ENCODE measurements at regions of chrX and their contacts with region 1.

Region 1: DNA sequence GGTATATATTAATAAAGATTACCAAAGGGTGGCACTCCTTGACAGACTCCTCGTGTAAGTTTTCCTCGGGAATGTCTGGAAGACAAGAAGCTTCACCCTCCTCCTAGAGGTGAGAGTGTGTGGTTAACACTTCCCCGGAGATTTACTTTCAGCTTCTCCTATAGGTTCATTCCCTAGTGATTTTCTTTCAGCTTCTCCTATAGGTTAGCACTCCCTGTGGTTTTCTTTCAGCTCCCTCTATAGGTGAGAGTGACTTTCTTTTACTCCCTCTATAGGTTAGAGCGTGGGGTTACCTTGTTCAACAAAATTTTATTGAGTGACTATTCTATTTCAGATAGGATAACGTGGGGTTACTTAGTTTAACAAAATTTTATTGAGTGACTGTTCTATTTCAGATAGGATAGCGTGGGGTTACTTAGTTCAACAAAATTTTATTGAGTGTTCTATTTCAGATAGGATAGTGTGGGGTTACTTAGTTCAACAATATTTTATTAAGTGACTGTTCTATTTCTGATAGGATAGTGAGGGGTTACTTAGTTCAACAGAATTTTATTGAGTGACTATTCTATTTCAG is 106.0 kb upstream of the PLAC1 start:
- DNase-seq: peak; percentile 38 to 55 (median 54)
- H3K4me3 ChIP-seq: no peak overlapping the region
- H3K27ac ChIP-seq: no peak overlapping the region
- H3K4me1 ChIP-seq: no peaks in the 10 kb centered on the region
- H3K27me3 ChIP-seq: no peaks in the 10 kb centered on the region

Region 2: DNA sequence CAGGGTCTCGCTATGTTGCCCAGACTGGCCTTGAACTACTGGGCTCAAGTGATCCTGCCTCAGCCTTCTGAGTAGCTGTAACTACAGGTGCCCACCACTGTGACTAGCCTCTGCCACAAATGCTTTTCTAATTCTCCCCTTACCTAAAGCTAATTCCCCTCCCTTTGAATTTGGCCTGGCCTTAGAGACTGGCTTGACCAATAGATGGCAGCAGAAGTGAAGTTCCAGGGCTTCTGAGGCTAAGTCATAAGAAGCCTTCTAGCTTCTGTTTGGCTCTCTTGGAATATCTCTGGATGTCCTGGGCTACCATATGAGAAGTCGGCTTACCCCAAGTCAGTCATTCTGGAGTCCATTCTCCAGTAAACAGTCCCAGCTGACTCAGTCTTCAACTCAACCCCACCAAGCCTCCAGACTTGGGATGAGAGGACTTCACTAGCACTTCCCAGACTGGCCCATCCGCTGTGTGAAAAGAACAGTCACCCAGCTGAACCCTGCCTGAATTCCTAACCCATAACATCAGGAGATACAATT is 243.4 kb before region 1 on chrX:
- CTCF ChIA-PET with region 1: interaction called, 24 read pairs
- POLR2A ChIA-PET with region 1: no interaction called
- DNase-seq: peak; percentile 65 to 81 (median 79)
- H3K4me3 ChIP-seq: no peak overlapping the region
- H3K27ac ChIP-seq: no peak overlapping the region
- H3K4me1 ChIP-seq: peaks cover 0 to 9% (median 4%) of the 10 kb centered on the region in 4 experiments
- H3K27me3 ChIP-seq: no peaks in the 10 kb centered on the region

Region 3: GRCh38 chrX:134734466-134734952 is 29.8 kb before region 1 on chrX:
- CTCF ChIA-PET with region 1: no interaction called
- POLR2A ChIA-PET with region 1: no interaction called
- DNase-seq: no peak
- H3K4me3 ChIP-seq: no peak overlapping the region
- H3K27ac ChIP-seq: no peak overlapping the region
- H3K4me1 ChIP-seq: peaks cover 0 to 12% (median 3%) of the 10 kb centered on the region in 4 experiments
- H3K27me3 ChIP-seq: no peaks in the 10 kb centered on the region